Spleen (tissue), 13 donors: ENCODE measurements at regions of chr5 and their contacts with region 1.

Region 1: GRCh38 chr5:151740336-151740942 is 18.0 kb downstream of the ATOX1 start:
- DNase-seq: no peak
- H3K4me3 ChIP-seq: peak overlapping the region in 1 of 8 donors; percentile 5
- H3K27ac ChIP-seq: peak overlapping the region in 7 of 8 donors; percentile 16 to 52 (median 47)
- H3K4me1 ChIP-seq: peaks cover 15 to 65% (median 37%) of the 10 kb centered on the region in 6 donors
- H3K27me3 ChIP-seq: no peaks in the 10 kb centered on the region
- CTCF ChIP-seq: peak; percentile 57 to 93 (median 87)
- POLR2A ChIP-seq: no peak

Region 2: DNA sequence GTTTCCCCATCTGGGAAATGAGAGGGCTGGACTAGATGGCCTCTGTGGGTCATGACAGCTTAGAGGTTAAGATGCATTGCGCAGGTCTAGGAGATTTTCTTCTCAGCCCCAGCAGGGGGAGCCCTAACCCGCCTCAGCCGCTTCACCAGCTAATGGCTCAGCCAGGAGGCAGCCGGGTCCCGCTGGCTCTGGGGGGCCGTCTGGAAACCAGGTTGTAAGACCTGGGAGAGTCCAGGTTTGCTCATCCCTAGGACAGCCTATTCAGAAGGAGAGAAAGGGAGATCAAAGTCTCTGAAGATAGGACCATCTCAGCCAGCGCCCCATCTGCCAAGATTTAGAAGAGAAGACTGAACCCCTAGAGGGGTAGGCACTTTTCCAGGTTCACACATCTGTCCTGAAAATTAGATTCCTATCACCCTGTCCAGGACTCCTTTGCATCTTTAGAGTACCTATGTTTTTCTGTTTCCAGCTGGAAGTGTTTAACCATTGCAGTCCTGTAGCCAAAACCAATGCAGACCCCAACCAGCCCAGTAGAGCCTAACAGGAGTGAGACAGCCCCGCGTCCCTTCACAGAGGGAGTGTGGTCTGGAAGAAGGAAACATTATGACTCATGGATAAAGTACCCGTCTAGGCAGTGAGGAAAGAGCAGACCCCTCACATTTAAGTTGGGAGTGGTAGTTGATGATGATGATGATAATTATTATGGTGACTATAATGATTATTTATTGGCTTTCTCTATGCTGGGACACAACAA is 81.3 kb before region 1 on chr5:
- intact Hi-C with region 1: loop called (anchors 5 kb)
- DNase-seq: peak; percentile 94
- H3K4me3 ChIP-seq: no peak overlapping the region
- H3K27ac ChIP-seq: peak overlapping the region in 1 of 8 donors; percentile 3
- H3K4me1 ChIP-seq: peaks cover 20 to 50% (median 31%) of the 10 kb centered on the region in 6 donors
- H3K27me3 ChIP-seq: peaks cover 0 to 5% (median 0%) of the 10 kb centered on the region in 7 donors
- CTCF ChIP-seq: peak; percentile 63 to 91 (median 83)
- POLR2A ChIP-seq: no peak

Region 3: GRCh38 chr5:151829370-151829769 is 88.9 kb after region 1 on chr5:
- intact Hi-C with region 1: no loop called
- DNase-seq: no peak
- H3K4me3 ChIP-seq: no peak overlapping the region
- H3K27ac ChIP-seq: no peak overlapping the region
- H3K4me1 ChIP-seq: no peaks in the 10 kb centered on the region
- H3K27me3 ChIP-seq: no peaks in the 10 kb centered on the region
- CTCF ChIP-seq: no peak
- POLR2A ChIP-seq: no peak